ENCODE measurements at regions of chr15 and their contacts with region 1.

Region 1: GRCh38 chr15:84598969-84599368 is 1.8 kb upstream of the ZSCAN2 start:
- DNase-seq: no peak
- H3K4me3 ChIP-seq: peak overlapping the region in 1 of 8 donors; percentile 38
- H3K27ac ChIP-seq: peak overlapping the region; percentile 80 to 92 (median 84)
- H3K4me1 ChIP-seq: peaks cover 28 to 86% (median 51%) of the 10 kb centered on the region in 6 donors
- H3K27me3 ChIP-seq: no peaks in the 10 kb centered on the region
- CTCF ChIP-seq: peak; percentile 26 to 73 (median 56)
- POLR2A ChIP-seq: no peak

Region 2: DNA sequence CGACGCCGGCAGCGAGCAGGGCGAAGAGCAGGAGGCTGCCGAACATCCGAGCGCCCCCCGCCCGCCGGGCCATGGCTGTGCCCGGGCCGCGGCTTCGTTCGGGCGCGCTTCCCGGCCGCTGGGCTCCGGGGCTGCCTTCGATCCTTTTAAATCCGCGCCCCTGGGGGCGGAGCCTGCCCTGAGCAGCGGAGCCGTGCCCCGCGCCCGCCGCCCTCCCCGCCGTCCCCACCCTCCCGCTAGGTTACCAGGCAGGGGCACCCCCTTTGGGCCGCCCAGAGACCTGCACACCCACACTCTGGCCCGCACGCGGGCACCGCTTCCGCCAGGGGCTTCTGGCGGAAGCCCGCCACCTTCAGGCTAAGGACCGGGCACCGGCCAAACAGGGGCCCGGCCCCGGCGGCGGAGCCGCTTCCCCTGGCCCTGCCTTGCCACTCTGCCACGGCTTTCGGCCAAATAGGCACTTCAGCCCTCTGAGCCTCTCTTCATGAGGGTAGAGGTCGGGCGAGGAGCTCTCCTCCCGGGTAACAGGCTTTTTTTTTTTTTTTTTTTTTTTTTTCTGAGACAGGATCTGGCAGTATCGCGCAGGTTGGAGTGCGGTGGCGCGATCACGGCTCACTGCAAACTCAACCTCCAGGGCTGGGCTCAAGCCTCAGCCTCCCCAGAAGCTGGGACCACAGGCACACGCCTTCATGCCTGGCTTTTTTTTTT is 59.3 kb after region 1 on chr15 and contains the start of gene NMB:
- intact Hi-C with region 1: loop called (anchors 10 kb)
- DNase-seq: peak; percentile 97
- H3K4me3 ChIP-seq: peak within 1 kb of the TSS; percentile 47 to 79 (median 52)
- H3K27ac ChIP-seq: peak within 1 kb of the TSS; percentile 70 to 86 (median 80)
- H3K4me1 ChIP-seq: peaks cover 8 to 59% (median 41%) of the 10 kb centered on the region in 6 donors
- H3K27me3 ChIP-seq: no peaks in the 10 kb centered on the region
- CTCF ChIP-seq: peak; percentile 41 to 86 (median 77)
- POLR2A ChIP-seq: no peak
- total RNA-seq, gene NMB: 1.0 to 4.2 (median 2.4) TPM

Region 3: DNA sequence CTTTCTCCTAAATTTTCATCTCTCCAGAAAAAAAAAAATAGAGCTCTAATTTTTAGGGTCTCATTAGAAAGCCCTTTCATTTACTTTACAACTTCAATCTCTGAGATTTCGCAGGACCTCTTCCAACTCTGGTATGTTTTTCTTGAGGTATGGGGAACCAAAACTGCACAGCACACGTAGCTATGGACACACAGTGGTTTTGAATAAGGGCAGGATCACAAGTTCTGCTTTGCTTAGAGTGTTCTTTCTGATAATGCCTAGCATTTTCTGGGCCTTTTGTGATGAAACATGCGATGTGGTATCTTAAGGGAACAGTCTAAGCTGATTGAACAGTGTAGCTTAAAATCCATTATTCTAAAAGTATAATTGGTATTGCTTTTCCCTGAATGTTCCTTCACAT is 174.7 kb after region 1 on chr15:
- intact Hi-C with region 1: no loop called
- DNase-seq: no peak
- H3K4me3 ChIP-seq: no peak overlapping the region
- H3K27ac ChIP-seq: peak overlapping the region in 5 of 8 donors; percentile 15 to 59 (median 29)
- H3K4me1 ChIP-seq: peaks cover 0 to 80% (median 35%) of the 10 kb centered on the region in 6 donors
- H3K27me3 ChIP-seq: no peaks in the 10 kb centered on the region
- CTCF ChIP-seq: no peak
- POLR2A ChIP-seq: no peak

Region 4: DNA sequence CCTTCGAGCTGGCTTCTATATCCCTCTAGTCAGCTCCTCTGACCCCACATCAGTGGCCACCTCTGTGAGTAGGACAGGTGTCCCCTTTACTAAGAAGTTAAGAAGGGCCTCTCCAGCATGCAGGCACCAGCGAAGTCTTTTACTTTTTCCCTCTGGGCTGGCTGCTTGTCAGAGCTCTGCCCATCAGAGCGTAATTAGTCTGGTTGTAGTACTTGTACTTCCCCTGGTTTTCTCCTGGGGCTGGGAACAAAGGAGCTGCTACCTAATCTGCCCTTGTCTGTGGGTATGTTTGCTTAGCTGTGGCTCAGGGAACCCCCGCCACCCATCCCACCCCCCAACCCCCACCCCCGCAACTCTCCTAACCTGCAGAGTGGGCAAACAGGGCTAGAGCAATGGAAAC is 190.8 kb after region 1 on chr15:
- intact Hi-C with region 1: no loop called
- DNase-seq: no peak
- H3K4me3 ChIP-seq: no peak overlapping the region
- H3K27ac ChIP-seq: peak overlapping the region in 1 of 8 donors; percentile 17
- H3K4me1 ChIP-seq: peaks cover 0 to 64% (median 28%) of the 10 kb centered on the region in 6 donors
- H3K27me3 ChIP-seq: no peaks in the 10 kb centered on the region
- CTCF ChIP-seq: no peak
- POLR2A ChIP-seq: no peak

Region 5: GRCh38 chr15:84915011-84915958 is 316.3 kb after region 1 on chr15:
- intact Hi-C with region 1: no loop called
- DNase-seq: no peak
- H3K4me3 ChIP-seq: no peak overlapping the region
- H3K27ac ChIP-seq: no peak overlapping the region
- H3K4me1 ChIP-seq: peaks cover 0 to 16% (median 4%) of the 10 kb centered on the region in 6 donors
- H3K27me3 ChIP-seq: no peaks in the 10 kb centered on the region
- CTCF ChIP-seq: no peak
- POLR2A ChIP-seq: no peak

Region 6: GRCh38 chr15:85044251-85044853 is 445.4 kb after region 1 on chr15:
- intact Hi-C with region 1: loop called (anchors 10 kb)
- DNase-seq: no peak
- H3K4me3 ChIP-seq: no peak overlapping the region
- H3K27ac ChIP-seq: no peak overlapping the region
- H3K4me1 ChIP-seq: peaks cover 10 to 54% (median 22%) of the 10 kb centered on the region in 6 donors
- H3K27me3 ChIP-seq: no peaks in the 10 kb centered on the region
- CTCF ChIP-seq: peak; percentile 27 to 76 (median 59)
- POLR2A ChIP-seq: no peak

Measured in spleen (tissue), 13 donors.